Left cardiac atrium (tissue), 4 donors: ENCODE measurements at regions of chr9 and their contacts with region 1.

Region 1: GRCh38 chr9:806285-807156 is 35.0 kb upstream of the DMRT1 start:
- DNase-seq: no peak
- ATAC-seq: peak in 1 of 2 donors; percentile 53

Region 2: GRCh38 chr9:394347-395052 is 412.0 kb before region 1 on chr9:
- intact Hi-C with region 1: loop called in 1 of 2 experiments (anchors 5 kb)
- DNase-seq: no peak
- ATAC-seq: peak; percentile 14 to 30

Region 3: GRCh38 chr9:673966-674526 is 132.5 kb before region 1 on chr9:
- intact Hi-C with region 1: no loop called
- DNase-seq: no peak
- ATAC-seq: no peak